Naive thymus-derived CD8-positive, alpha-beta T cell (primary cell): ENCODE measurements at regions of chr19 and their contacts with region 1.

Region 1: GRCh38 chr19:45178262-45179071 is at the start of gene BLOC1S3:
- DNase-seq: peak; percentile 96 to 100 (median 100)
- ATAC-seq: peak; percentile 85 to 86
- H3K4me3 Mint-ChIP-seq: peak within 1 kb of the TSS; percentile 88 to 100 (median 94)
- H3K27ac Mint-ChIP-seq: peak within 1 kb of the TSS; percentile 93 to 99 (median 96)
- H3K4me1 Mint-ChIP-seq: peaks cover 16 to 59% (median 50%) of the 10 kb centered on the region in 4 donors
- H3K27me3 Mint-ChIP-seq: no peaks in the 10 kb centered on the region
- polyA plus RNA-seq, gene BLOC1S3: 8.4 to 14.4 (median 9.7) TPM

Region 2: GRCh38 chr19:45001087-45001739 is 177.3 kb before region 1 on chr19 and contains the start of gene RELB:
- POLR2A ChIA-PET with region 1: interaction called, 12 read pairs
- DNase-seq: peak; percentile 90 to 99 (median 96)
- ATAC-seq: peak; percentile 71 to 73
- H3K4me3 Mint-ChIP-seq: peak within 1 kb of the TSS; percentile 89 to 100 (median 97)
- H3K27ac Mint-ChIP-seq: peak within 1 kb of the TSS; percentile 95 to 100 (median 100)
- H3K4me1 Mint-ChIP-seq: peaks cover 6 to 28% (median 12%) of the 10 kb centered on the region in 4 donors
- H3K27me3 Mint-ChIP-seq: peaks cover 0 to 2% (median 0%) of the 10 kb centered on the region in 5 donors
- polyA plus RNA-seq, gene RELB: 6.7 to 17.2 (median 8.3) TPM

Region 3: DNA sequence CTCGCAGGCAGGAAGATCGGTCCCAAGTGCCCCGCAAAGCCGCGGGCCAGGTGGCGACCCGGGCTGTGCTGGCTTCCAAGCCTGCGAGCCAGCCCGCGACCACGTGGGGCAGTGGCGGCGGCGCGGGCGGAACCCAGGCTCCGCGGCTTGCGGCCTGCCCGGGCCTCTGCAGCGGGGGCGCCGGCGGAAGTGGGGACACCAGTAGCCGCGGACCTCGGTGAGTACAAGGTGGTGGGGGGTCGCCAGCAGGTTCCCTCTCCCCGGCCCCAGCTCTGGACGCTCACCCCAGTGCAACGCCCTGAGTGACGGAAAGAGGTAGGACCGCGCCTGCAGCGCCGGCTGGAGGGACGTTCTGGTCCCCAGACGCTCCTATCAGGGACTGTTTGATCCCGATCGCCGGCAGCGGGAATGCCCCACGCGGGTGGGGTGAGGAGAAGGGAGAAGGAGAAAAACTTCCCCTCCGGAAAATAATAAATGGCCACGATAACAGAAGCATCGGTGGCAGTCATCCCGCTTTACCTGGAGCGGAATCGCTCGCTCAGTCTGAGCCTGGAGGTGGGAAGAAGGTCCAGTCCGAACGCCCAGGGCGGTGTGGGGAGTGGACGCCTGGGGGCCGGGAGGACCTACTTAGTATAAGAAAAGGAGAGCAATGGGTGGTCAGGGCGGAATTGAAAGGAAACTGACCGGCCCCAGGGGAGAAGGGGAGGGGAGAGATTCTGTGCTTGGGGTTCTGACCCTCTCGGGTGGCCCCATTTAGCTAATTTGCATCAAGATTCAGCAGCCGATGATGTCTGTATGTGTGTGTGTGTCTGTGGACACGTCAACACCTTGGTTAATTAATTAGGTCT is 99.2 kb before region 1 on chr19 and contains the start of gene GEMIN7:
- POLR2A ChIA-PET with region 1: interaction called, 10 read pairs
- DNase-seq: peak; percentile 59 to 80 (median 77)
- ATAC-seq: peak; percentile 69 to 81
- H3K4me3 Mint-ChIP-seq: peak within 1 kb of the TSS; percentile 91 to 97 (median 94)
- H3K27ac Mint-ChIP-seq: peak within 1 kb of the TSS; percentile 83 to 94 (median 92)
- H3K4me1 Mint-ChIP-seq: peaks cover 15 to 65% (median 58%) of the 10 kb centered on the region in 4 donors
- H3K27me3 Mint-ChIP-seq: no peaks in the 10 kb centered on the region
- polyA plus RNA-seq, gene GEMIN7: 44.2 to 70.0 (median 50.3) TPM

Region 4: DNA sequence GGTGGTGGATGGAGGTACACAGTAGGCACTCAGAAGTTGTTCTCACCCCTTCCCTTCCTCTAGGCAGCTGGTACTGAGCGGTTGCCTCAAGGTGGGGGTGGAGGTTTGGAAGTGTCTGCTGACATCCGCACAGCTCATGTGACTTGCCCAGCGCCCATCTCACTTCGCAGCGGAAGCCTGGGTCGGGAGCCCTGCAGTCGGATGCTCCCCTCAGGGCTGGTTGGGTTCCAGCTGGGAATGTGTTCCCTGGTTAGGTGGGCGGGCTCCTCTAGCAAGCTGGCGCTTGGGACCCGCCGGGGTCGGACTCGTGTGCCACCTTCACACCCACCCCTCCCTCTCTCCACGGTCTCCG is 75.3 kb before region 1 on chr19:
- POLR2A ChIA-PET with region 1: interaction called, 15 read pairs
- DNase-seq: peak in 7 of 10 donors; percentile 35 to 76 (median 55)
- ATAC-seq: peak; percentile 91 to 93
- H3K4me3 Mint-ChIP-seq: peak overlapping the region; percentile 36 to 82 (median 75)
- H3K27ac Mint-ChIP-seq: peak overlapping the region; percentile 61 to 93 (median 88)
- H3K4me1 Mint-ChIP-seq: peaks cover 39 to 82% (median 73%) of the 10 kb centered on the region in 4 donors
- H3K27me3 Mint-ChIP-seq: no peaks in the 10 kb centered on the region

Region 5: DNA sequence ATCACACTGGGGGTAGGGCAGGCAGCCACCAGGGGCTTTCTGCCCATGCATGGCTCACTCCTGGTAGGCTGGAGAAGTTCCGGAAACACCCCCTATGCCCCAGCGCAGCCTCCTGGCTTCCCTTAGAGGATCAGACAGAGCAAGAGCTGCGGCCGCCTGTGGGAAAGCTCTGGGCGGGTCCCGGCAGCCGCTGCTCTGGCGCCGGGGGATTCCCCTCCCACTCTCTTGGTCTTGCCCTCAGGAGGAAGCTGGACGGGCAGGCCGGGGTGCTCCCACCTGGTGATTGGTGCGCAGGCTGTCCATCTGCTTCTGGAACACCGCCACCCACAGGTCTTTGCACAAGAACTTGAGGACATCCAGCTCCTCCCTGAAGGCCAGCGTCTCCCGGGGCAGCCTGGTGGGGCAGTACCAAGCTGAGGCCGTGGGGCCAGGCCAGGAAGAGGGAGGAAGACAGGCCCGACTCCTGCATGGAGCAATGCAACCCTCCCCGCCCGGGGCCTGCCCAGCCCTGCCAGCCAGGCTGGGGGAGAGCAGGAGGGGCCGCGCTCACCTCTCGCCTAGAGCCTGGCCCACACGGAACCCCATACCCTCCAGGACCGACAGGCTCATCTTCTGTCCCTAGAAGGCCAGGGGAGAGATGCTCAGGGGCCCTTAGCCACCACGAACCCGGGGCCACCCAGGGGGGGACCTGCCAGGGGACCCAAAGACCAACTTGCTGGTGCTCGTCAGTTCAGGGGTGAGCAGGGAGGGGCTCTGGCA is 13.7 kb before region 1 on chr19:
- POLR2A ChIA-PET with region 1: interaction called, 13 read pairs
- DNase-seq: peak; percentile 17 to 66 (median 40)
- ATAC-seq: peak; percentile 93 to 95
- H3K4me3 Mint-ChIP-seq: peak overlapping the region in 5 of 10 donors; percentile 8 to 58 (median 40)
- H3K27ac Mint-ChIP-seq: peak overlapping the region in 5 of 10 donors; percentile 14 to 81 (median 47)
- H3K4me1 Mint-ChIP-seq: peaks cover 8 to 31% (median 24%) of the 10 kb centered on the region in 4 donors
- H3K27me3 Mint-ChIP-seq: peaks cover 0 to 3% (median 0%) of the 10 kb centered on the region in 5 donors

Region 6: GRCh38 chr19:46181388-46181779 is 1002.9 kb after region 1 on chr19:
- POLR2A ChIA-PET with region 1: no interaction called
- DNase-seq: no peak
- ATAC-seq: no peak
- H3K4me3 Mint-ChIP-seq: no peak overlapping the region
- H3K27ac Mint-ChIP-seq: no peak overlapping the region
- H3K4me1 Mint-ChIP-seq: peaks cover 0 to 13% (median 4%) of the 10 kb centered on the region in 4 donors
- H3K27me3 Mint-ChIP-seq: peaks cover 2 to 65% (median 32%) of the 10 kb centered on the region in 5 donors